ENCODE measurements at regions of chr1 and their contacts with region 1.

Region 1: GRCh38 chr1:68542586-68542985 is 45.7 kb upstream of the DEPDC1 start:
- DNase-seq: no peak
- H3K4me3 ChIP-seq: no peak overlapping the region
- H3K27ac ChIP-seq: no peak overlapping the region
- H3K4me1 ChIP-seq: no peaks in the 10 kb centered on the region
- H3K27me3 ChIP-seq: no peaks in the 10 kb centered on the region
- CTCF ChIP-seq: no peak

Region 2: DNA sequence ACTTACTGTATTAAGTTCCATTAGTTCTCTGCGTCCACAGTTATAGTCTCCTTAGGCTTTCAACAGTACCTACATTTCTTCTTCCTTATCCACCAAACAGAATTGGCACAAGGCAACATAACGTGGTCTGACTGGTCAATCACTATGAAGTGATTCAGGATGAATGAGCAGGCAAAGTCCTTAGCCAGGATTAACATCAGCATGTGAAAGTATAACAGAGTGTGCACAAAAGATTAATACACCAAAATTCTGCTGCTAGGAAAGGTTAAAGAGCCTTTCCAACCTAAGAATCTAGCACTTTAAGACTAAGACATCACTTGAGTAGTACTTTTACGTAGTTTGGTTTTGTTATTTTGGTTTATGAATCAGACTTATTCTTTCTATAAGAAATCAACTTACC is 61.5 kb before region 1 on chr1:
- CTCF ChIA-PET with region 1: no interaction called
- POLR2A ChIA-PET with region 1: no interaction called
- intact Hi-C with region 1: no loop called
- DNase-seq: no peak
- H3K4me3 ChIP-seq: no peak overlapping the region
- H3K27ac ChIP-seq: no peak overlapping the region
- H3K4me1 ChIP-seq: no peaks in the 10 kb centered on the region
- H3K27me3 ChIP-seq: no peaks in the 10 kb centered on the region
- CTCF ChIP-seq: no peak

Region 3: DNA sequence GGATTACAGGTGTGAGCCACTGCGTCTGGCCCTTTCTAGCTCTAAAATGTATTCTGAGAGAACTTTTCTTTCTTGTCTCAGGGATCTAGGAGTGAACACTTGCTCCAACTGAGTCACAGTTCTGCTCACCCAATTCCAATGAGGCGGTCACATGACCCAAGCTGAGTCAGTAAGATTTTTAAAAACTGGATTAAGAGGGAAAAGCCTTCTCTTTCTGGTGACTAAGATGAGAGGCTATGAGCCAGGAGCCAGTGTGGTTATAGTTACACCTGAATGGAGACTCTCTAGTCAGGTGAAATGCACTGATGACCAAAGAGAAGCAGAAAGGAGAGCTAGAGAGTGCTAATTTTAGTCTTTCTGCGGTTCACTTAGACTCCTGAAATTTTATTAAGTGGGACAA is 36.2 kb before region 1 on chr1:
- CTCF ChIA-PET with region 1: no interaction called
- POLR2A ChIA-PET with region 1: interaction called, 12 read pairs
- intact Hi-C with region 1: no loop called
- DNase-seq: no peak
- H3K4me3 ChIP-seq: no peak overlapping the region
- H3K27ac ChIP-seq: no peak overlapping the region
- H3K4me1 ChIP-seq: no peaks in the 10 kb centered on the region
- H3K27me3 ChIP-seq: no peaks in the 10 kb centered on the region
- CTCF ChIP-seq: no peak

Measured in PC-9 (cell line).